ENCODE measurements at regions of chr11 and their contacts with region 1.

Region 1: DNA sequence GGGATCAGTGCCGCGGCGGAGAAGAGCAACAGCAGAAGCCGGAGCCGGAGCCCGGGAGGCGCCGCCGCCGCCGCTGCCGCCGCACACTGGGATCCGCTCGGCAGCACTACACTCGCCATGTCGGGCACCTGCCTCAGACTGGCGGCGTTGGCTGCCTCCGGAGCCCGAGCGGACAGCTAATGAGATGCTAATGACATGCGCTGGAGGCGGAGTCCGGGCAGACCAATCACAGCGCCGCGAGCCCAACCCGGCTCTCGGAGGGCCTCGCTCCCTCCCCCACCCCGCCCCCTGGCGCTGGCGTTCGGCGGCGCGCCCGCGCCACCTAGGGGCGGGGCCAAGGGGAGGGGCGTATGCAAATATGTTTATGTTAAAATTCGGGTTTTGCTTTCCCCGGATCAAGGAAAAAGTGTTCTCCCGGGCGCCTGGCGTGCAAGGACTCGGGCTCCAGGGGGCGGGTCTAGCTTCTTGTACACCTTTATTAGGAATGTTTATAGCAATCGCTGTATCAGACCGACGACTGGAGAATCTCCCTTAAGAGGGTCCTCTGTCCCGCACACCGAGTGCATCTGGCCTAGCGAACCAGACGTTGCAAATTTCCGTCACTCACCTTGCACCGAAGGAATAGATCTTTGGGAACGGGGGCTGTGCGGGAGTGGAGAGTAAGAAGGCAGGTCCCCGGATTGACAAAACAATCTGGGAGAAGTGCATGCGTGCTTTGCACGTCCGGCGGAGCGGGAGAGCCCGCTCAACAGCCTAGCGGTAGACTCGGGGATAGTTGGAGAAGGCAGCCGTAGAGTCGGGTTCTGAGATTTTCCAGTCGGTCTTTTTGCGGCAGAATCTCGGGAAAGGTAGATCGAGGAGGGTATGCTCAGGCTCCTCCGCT is at the start of gene CADM1:
- DNase-seq: peak; percentile 98 to 100 (median 99)
- H3K4me3 ChIP-seq: peak within 1 kb of the TSS; percentile 63 to 93 (median 86)
- H3K27ac ChIP-seq: peak within 1 kb of the TSS; percentile 71 to 99 (median 96)
- H3K27me3 ChIP-seq: no peaks in the 10 kb centered on the region
- CTCF ChIP-seq: peak; percentile 20 to 91 (median 62)
- total RNA-seq, gene CADM1: 119 to 227 (median 154) TPM

Region 2: GRCh38 chr11:115334932-115335788 is 169.4 kb before region 1 on chr11:
- intact Hi-C with region 1: loop called (anchors 2 kb)
- DNase-seq: no peak
- H3K4me3 ChIP-seq: no peak overlapping the region
- H3K27ac ChIP-seq: no peak overlapping the region
- H3K27me3 ChIP-seq: no peaks in the 10 kb centered on the region
- CTCF ChIP-seq: peak; percentile 55 to 90 (median 78)

Region 3: DNA sequence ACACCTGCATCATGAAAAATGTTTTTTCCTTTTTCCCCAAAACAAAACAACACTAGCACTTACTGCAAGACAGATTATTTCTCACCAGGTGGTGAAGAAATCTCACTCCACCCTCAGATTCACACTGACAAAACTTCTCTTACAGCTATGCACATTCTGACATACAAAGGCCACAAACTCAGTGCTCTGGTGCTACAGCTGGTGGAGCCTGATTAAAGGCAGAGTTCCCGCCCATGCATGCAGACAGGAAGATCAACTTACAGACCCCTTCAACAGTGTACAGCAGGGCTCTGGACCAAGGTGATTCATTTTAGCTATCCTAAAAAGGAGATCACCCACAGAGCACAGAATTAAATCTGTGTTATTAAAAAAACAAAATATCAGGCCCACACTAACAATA is 112.9 kb before region 1 on chr11:
- intact Hi-C with region 1: loop called in 1 of 2 experiments (anchors 5 kb)
- DNase-seq: no peak
- H3K4me3 ChIP-seq: no peak overlapping the region
- H3K27ac ChIP-seq: peak overlapping the region in 1 of 59 donors; percentile 12
- H3K27me3 ChIP-seq: no peaks in the 10 kb centered on the region
- CTCF ChIP-seq: no peak

Region 4: DNA sequence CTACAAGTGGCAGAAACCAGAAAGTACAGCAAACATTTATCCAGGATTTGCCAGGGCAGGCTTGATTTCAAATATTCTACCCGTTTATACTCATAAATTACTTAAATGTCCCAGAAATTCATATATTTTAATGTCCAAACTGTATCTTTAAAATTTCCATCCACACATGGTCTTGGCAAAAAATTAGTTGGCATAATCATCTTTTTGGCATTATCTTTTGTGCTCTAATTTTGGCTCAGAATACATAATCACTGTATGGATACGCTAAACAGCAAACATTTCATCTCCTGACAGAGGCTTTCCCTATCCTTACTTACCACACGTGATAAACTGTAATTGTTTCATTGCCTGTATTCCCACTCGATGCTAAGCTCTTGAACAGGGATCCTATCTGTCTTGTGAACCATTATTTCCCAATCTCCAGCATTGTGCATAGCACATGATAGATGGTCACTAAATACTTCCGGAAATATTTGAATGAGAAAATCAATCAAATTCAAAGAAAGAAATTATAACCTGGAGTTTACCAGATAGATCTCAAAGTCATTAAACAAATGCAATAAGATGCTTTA is 64.5 kb before region 1 on chr11:
- intact Hi-C with region 1: loop called in 1 of 2 experiments (anchors 5 kb)
- DNase-seq: no peak
- H3K4me3 ChIP-seq: no peak overlapping the region
- H3K27ac ChIP-seq: peak overlapping the region in 5 of 59 donors; percentile 5 to 46 (median 28)
- H3K27me3 ChIP-seq: no peaks in the 10 kb centered on the region
- CTCF ChIP-seq: no peak

Region 5: GRCh38 chr11:115535781-115536180 is 31.3 kb after region 1 on chr11:
- intact Hi-C with region 1: no loop called
- DNase-seq: no peak
- H3K4me3 ChIP-seq: no peak overlapping the region
- H3K27ac ChIP-seq: no peak overlapping the region
- H3K27me3 ChIP-seq: peaks cover 0 to 34% (median 3%) of the 10 kb centered on the region in 45 donors
- CTCF ChIP-seq: no peak

Region 6: GRCh38 chr11:116217006-116217405 is 712.5 kb after region 1 on chr11:
- intact Hi-C with region 1: loop called in 1 of 2 experiments (anchors 10 kb)
- DNase-seq: peak; percentile 36 to 76 (median 62)
- H3K4me3 ChIP-seq: no peak overlapping the region
- H3K27ac ChIP-seq: no peak overlapping the region
- H3K27me3 ChIP-seq: no peaks in the 10 kb centered on the region
- CTCF ChIP-seq: peak in 54 of 56 donors; percentile 31 to 84 (median 70)